GM10248 (cell line): ENCODE measurements at regions of chr15 and their contacts with region 1.

Region 1: GRCh38 chr15:89971592-89971997 is 29.5 kb upstream of the ZNF710 start:
- DNase-seq: peak; percentile 73
- CTCF ChIP-seq: peak; percentile 51

Region 2: DNA sequence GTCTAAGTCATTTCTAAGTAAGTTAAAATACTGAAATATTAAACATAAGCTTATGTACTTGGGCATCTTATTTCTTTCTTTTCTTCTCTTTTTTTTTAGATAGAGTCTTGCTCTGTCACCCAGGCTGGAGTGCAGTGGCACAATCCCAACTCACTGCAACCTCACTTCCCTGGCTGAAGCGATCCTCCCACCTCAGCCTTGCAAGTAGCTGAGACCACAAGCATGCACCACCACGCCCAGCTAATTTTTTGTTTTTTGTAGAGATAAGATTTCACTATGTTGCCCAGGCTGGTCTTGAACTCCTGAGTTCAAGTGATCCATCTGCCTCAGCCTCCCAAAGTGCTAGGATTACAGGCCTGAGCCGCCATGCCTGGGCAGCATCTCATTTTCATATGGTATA is 13.5 kb after region 1 on chr15:
- CTCF ChIA-PET with region 1: interaction called, 14 read pairs
- POLR2A ChIA-PET with region 1: no interaction called
- DNase-seq: no peak
- CTCF ChIP-seq: no peak